Activated B cell treated with CpG ODN at 0.5 μM for 24 hours (primary cell): ENCODE measurements at regions of chr14 and their contacts with region 1.

Region 1: GRCh38 chr14:22464422-22465142 is 124.4 kb downstream of the DAD1 start:
- DNase-seq: no peak
- ATAC-seq: peak; percentile 47
- H3K4me3 Mint-ChIP-seq: peak overlapping the region; percentile 4
- H3K27ac Mint-ChIP-seq: peak overlapping the region; percentile 70
- H3K4me1 Mint-ChIP-seq: peaks cover 57% of the 10 kb centered on the region
- H3K27me3 Mint-ChIP-seq: no peaks in the 10 kb centered on the region
- CTCF ChIP-seq: no peak

Region 2: DNA sequence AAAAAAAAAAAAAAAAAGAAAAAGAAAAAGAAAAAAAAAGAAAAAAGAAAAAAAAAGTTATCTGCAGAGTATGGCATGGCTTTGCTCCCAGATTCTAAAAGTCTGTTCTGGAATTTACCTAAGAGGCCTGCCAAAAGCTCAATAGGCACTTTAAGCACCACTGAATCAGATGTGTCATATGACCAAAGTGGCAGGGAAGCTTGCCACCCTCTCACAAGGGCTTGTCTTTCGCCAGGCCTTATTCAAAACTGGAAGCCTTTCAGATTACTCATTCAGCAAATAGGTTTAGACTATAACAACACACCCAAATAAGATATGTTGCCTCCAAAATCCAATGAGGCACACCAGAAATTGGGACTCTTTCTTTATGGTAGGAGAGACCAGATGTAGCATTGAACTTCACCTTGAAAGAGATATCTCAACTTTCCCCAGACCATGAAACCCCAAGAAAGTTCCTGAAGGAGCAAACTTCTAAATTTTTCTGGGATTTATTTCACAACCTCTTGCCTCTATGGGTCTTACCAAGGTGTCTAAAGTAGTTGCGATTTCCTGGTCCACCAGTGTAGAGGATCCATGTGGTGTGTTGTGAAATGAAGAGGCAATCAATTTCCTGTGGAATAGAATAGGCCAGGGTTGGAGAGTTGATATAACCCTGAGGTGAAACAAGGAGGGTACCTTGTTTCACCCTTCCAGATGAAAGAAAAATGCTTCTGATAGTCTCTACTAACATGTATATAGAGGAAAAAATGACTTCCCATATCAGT is 94.3 kb before region 1 on chr14:
- CTCF ChIA-PET with region 1: no interaction called
- POLR2A ChIA-PET with region 1: no interaction called
- intact Hi-C with region 1: no loop called
- DNase-seq: no peak
- ATAC-seq: no peak
- H3K4me3 Mint-ChIP-seq: no peak overlapping the region
- H3K27ac Mint-ChIP-seq: no peak overlapping the region
- H3K4me1 Mint-ChIP-seq: no peaks in the 10 kb centered on the region
- H3K27me3 Mint-ChIP-seq: peaks cover 9% of the 10 kb centered on the region
- CTCF ChIP-seq: no peak

Region 3: DNA sequence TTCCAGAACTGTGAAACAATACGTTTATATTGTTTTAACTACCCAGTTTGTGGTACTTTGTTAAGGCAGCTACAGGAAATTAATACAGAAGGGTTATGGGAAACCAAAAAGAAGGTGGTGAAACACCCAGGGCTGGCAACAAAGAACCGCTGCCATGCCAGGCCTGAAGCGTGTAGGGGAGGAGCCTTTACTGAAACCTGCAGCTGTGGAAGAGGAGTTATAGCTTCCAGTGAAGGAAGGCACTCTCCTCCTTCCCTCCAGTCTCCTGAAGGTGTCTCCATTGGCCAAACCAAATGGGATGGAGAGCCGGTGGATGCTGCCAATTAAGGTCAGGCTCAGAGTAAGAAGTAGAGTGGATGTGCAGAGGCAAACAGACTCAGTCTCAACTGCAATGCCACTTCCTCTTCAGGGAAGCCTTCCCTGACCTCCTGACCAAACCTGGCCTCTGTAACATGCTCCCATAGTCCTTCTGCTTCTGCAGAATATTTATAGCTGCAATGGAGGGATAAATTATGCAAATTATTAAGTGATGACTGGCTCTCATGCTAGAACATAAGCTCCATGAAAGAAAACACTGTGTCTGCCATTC is 43.9 kb before region 1 on chr14:
- CTCF ChIA-PET with region 1: no interaction called
- POLR2A ChIA-PET with region 1: interaction called, 4 read pairs
- intact Hi-C with region 1: loop called (anchors 5 kb)
- DNase-seq: no peak
- ATAC-seq: no peak
- H3K4me3 Mint-ChIP-seq: no peak overlapping the region
- H3K27ac Mint-ChIP-seq: no peak overlapping the region
- H3K4me1 Mint-ChIP-seq: peaks cover 31% of the 10 kb centered on the region
- H3K27me3 Mint-ChIP-seq: no peaks in the 10 kb centered on the region
- CTCF ChIP-seq: no peak

Region 4: GRCh38 chr14:22448905-22449599 is 15.5 kb before region 1 on chr14:
- CTCF ChIA-PET with region 1: interaction called, 8 read pairs
- POLR2A ChIA-PET with region 1: interaction called, 10 read pairs
- intact Hi-C with region 1: loop called (anchors 2 kb)
- DNase-seq: no peak
- ATAC-seq: peak; percentile 58
- H3K4me3 Mint-ChIP-seq: peak overlapping the region; percentile 3
- H3K27ac Mint-ChIP-seq: peak overlapping the region; percentile 78
- H3K4me1 Mint-ChIP-seq: peaks cover 23% of the 10 kb centered on the region
- H3K27me3 Mint-ChIP-seq: no peaks in the 10 kb centered on the region
- CTCF ChIP-seq: no peak

Region 5: GRCh38 chr14:22478670-22479069 is 14.1 kb after region 1 on chr14:
- CTCF ChIA-PET with region 1: interaction called, 3 read pairs
- POLR2A ChIA-PET with region 1: interaction called, 11 read pairs
- intact Hi-C with region 1: no loop called
- DNase-seq: no peak
- ATAC-seq: no peak
- H3K4me3 Mint-ChIP-seq: peak overlapping the region; percentile 42
- H3K27ac Mint-ChIP-seq: peak overlapping the region; percentile 85
- H3K4me1 Mint-ChIP-seq: peaks cover 98% of the 10 kb centered on the region
- H3K27me3 Mint-ChIP-seq: no peaks in the 10 kb centered on the region
- CTCF ChIP-seq: no peak

Region 6: DNA sequence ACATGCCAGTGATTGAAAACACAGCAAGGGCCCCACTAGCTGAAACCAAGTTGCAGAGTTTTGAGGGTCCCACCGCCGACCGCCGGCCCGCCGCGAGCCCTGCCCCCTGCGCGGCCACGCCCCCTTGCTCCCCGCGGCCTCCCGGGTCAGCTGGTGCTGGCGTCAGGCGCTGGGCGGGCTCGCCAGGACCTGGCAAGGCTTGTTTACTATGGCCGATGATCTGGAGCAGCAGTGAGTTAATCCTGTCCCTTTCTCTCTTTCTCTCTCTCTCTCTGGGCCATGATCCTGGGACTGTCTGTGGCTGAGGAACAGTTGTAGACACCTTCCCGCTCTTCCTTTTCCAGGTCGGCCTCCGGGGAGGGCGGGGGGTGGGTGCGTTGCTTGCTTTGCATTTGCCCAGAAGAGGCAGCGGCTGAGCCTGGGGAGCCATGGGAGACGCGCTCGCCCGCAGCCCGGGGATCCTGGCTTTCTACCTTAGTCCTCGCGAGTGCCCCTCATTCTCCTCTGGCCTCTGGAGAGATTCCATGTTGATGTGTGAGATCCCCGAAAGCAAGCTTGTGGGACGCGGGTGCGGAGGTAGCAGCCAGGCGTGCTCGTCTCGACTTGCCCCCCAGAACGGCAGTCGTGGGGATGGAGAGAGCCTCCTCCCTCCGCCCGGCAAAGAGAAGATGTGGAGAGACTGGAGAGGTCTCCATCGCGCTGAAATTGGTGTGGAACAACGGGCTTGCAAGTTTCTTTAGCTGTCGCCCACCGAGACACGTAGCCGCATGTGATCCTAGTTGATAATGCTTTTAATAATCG is 133.7 kb after region 1 on chr14 and contains the start of gene ABHD4:
- CTCF ChIA-PET with region 1: no interaction called
- POLR2A ChIA-PET with region 1: interaction called, 13 read pairs
- intact Hi-C with region 1: no loop called
- DNase-seq: peak; percentile 71
- ATAC-seq: peak; percentile 90
- H3K4me3 Mint-ChIP-seq: peak within 1 kb of the TSS; percentile 95
- H3K27ac Mint-ChIP-seq: peak within 1 kb of the TSS; percentile 88
- H3K4me1 Mint-ChIP-seq: peaks cover 28% of the 10 kb centered on the region
- H3K27me3 Mint-ChIP-seq: peaks cover 2% of the 10 kb centered on the region
- CTCF ChIP-seq: no peak
- total RNA-seq, gene ABHD4: 12.1 and 13.0 TPM in 2 replicates